Vagina (tissue), 2 donors: ENCODE measurements at regions of chr6 and their contacts with region 1.

Region 1: DNA sequence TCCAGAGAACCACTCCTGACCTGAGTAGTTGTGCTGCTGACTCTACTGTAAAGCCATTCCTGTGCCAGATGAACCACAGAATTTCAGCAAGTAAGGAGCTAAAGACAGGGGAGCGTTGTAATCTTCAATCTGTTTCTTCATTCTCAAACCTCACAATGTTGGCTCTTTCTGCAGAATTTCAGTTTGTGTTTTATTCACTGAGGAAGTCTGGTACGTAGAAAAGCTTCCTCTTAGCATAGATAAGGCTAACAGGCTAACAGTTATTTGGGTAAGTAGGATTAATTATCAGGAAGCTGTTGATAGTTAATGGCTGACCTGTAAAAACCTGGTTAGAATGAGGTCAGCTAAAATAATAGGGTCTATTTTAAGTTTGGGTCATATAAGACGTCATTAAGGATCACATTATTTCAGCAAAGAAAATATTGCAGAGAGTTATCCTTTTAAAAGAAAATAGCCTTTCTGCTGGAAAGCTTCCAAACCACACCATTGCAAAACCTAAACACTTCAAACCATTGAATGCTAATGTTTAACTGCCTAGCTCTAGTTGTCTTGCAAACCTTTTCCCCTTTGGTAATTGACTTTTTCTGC is 14.1 kb upstream of the TENT5A start:
- DNase-seq: no peak
- H3K4me3 ChIP-seq: no peak overlapping the region
- H3K27ac ChIP-seq: peak overlapping the region; percentile 21
- H3K4me1 ChIP-seq: peaks cover 20% of the 10 kb centered on the region
- H3K27me3 ChIP-seq: no peaks in the 10 kb centered on the region
- CTCF ChIP-seq: no peak
- POLR2A ChIP-seq: no peak

Region 2: DNA sequence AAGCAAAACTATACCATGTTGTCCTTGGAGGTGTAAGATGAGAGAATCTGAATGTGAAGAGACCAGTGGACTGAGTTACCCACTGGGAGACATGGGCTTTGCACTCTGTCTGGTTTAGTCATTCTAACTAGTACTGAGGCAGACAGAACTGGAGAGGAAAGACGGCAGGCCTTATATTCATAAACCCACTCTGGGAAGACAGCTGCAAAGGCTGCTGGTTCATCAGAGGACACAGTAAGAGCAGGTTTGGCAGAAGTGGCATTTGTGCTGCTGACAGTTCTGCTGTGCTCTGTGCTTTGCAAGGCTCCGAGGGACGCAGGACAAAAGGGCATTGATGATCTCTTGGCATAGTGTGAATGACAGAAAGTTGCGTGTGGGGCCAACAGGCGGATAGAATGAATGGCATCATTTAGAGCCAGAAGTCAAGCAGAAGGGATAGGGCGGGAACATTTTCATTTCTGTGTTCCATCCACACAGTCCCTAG is 128.3 kb after region 1 on chr6:
- intact Hi-C with region 1: loop called (anchors 10 kb)
- DNase-seq: no peak
- H3K4me3 ChIP-seq: no peak overlapping the region
- H3K27ac ChIP-seq: no peak overlapping the region
- H3K4me1 ChIP-seq: no peaks in the 10 kb centered on the region
- H3K27me3 ChIP-seq: no peaks in the 10 kb centered on the region
- CTCF ChIP-seq: no peak
- POLR2A ChIP-seq: no peak